ENCODE measurements at regions of chr1 and their contacts with region 1.

Region 1: DNA sequence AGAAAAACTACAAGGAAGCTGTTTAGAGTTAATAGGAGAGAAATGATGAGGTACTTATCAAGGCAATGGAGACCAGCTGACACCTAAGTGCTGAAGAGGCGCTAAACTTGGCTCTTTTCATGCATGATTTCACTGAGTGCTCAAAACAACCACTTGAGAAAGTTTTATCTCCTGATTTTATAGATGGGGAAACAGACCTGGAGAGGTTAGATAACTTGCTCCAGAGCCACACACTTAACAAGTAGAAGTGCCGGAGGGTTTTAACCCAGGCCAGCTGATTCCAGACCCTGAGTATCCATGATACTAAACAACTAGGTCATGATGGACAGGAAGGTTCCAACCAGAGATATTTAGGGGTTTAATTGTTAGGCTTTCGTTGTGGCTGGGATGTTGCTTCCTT is 25.9 kb downstream of the UBE2U start:
- DNase-seq: no peak
- ATAC-seq: no peak
- H3K4me3 Mint-ChIP-seq: no peak overlapping the region
- H3K27ac Mint-ChIP-seq: no peak overlapping the region
- H3K4me1 Mint-ChIP-seq: no peaks in the 10 kb centered on the region
- H3K27me3 Mint-ChIP-seq: peaks cover 11% of the 10 kb centered on the region

Region 2: GRCh38 chr1:64082459-64082858 is 146.8 kb before region 1 on chr1:
- CTCF ChIA-PET with region 1: no interaction called
- POLR2A ChIA-PET with region 1: interaction called, 10 read pairs
- DNase-seq: no peak
- ATAC-seq: no peak
- H3K4me3 Mint-ChIP-seq: no peak overlapping the region
- H3K27ac Mint-ChIP-seq: no peak overlapping the region
- H3K4me1 Mint-ChIP-seq: no peaks in the 10 kb centered on the region
- H3K27me3 Mint-ChIP-seq: no peaks in the 10 kb centered on the region